ENCODE measurements at regions of chr1 and their contacts with region 1.

Region 1: GRCh38 chr1:201310986-201311355 is 27.7 kb downstream of the PKP1 start:
- DNase-seq: no peak

Region 2: GRCh38 chr1:201275041-201275676 is 35.8 kb before region 1 on chr1:
- intact Hi-C with region 1: loop called in 1 of 2 experiments (anchors 2 kb)
- DNase-seq: peak; percentile 86

Measured in posterior vena cava (tissue), 2 donors.